PC-9 (cell line): ENCODE measurements at regions of chrX and their contacts with region 1.

Region 1: GRCh38 chrX:40175511-40176350 is 78.0 kb upstream of the BCOR start:
- DNase-seq: peak in 1 of 2 experiments; percentile 39
- H3K4me3 ChIP-seq: peak overlapping the region; percentile 53
- H3K27ac ChIP-seq: peak overlapping the region; percentile 80
- H3K4me1 ChIP-seq: 0 out of 2 replicates have a peak, but pooled peaks cover 6% of the 10 kb centered on the region
- H3K27me3 ChIP-seq: no peaks in the 10 kb centered on the region
- CTCF ChIP-seq: no peak

Region 2: GRCh38 chrX:40097497-40098263 is 78.1 kb before region 1 on chrX and contains the start of gene BCOR:
- CTCF ChIA-PET with region 1: no interaction called
- POLR2A ChIA-PET with region 1: interaction called, 6 read pairs
- intact Hi-C with region 1: loop called (anchors 2 kb)
- DNase-seq: peak in 1 of 2 experiments; percentile 58
- H3K4me3 ChIP-seq: peak within 1 kb of the TSS; percentile 55; the same call in 1 of the 2 replicates
- H3K27ac ChIP-seq: no peak within 1 kb of the TSS
- H3K4me1 ChIP-seq: peaks cover 8% of the 10 kb centered on the region; the same call in 1 of the 2 replicates
- H3K27me3 ChIP-seq: no peaks in the 10 kb centered on the region
- CTCF ChIP-seq: no peak
- total RNA-seq, gene BCOR: 0.68 and 1.5 TPM in 2 replicates

Region 3: GRCh38 chrX:40260146-40260747 is 84.5 kb after region 1 on chrX:
- CTCF ChIA-PET with region 1: interaction called, 3 read pairs
- POLR2A ChIA-PET with region 1: no interaction called
- intact Hi-C with region 1: loop called (anchors 2 kb)
- DNase-seq: no peak
- H3K4me3 ChIP-seq: no peak overlapping the region
- H3K27ac ChIP-seq: no peak overlapping the region
- H3K4me1 ChIP-seq: no peaks in the 10 kb centered on the region
- H3K27me3 ChIP-seq: no peaks in the 10 kb centered on the region
- CTCF ChIP-seq: no peak

Region 4: DNA sequence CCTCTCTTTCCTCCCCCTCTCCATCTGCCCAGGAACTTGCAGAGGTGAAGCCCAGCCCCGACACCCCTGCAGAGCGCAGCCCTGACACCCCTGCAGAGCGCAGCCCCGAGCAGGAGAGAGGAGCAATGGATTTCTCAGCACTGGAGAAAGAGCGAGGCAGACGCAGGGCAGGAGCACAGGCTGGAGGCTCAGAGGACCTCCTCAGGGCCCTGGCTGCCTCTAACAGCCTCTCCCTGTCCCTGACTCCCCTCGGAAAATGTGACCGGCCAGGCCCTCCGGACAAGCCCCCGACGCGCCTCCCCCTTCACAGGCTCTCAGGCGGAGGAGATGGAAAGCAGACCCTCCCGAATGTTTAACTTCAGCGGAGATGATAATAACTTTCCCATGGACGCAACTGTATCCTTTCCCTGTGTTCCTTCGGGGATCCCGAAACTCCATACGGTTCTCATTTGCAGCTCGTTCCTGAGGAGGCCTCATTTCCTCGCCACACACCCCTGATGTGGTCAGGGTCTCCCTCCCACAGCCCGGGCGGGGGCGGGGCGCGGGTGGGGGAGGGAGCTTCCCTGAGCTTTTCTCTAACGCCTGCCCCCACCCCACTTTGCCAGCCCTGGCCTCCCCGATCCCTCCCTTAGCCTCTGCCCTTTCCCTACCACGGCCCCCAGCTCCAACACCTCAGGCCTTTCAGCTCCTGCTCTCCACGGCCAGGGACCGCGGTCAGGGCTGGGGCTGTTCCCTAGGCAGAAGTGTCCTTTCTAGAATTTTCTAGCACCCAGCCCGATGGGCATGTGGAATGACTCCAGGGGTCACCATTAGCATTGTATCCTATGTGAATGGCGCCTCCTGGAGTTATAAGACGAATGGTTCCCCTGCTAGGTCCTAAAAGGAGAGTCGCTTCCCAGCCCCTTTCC is 123.1 kb after region 1 on chrX:
- CTCF ChIA-PET with region 1: no interaction called
- POLR2A ChIA-PET with region 1: no interaction called
- intact Hi-C with region 1: no loop called
- DNase-seq: no peak
- H3K4me3 ChIP-seq: no peak overlapping the region
- H3K27ac ChIP-seq: no peak overlapping the region
- H3K4me1 ChIP-seq: no peaks in the 10 kb centered on the region
- H3K27me3 ChIP-seq: no peaks in the 10 kb centered on the region
- CTCF ChIP-seq: no peak